ENCODE measurements at regions of chr7 and their contacts with region 1.

Region 1: GRCh38 chr7:94657771-94658693 is 2.1 kb upstream of the SGCE start:
- DNase-seq: peak; percentile 82
- CTCF ChIP-seq: no peak

Region 2: DNA sequence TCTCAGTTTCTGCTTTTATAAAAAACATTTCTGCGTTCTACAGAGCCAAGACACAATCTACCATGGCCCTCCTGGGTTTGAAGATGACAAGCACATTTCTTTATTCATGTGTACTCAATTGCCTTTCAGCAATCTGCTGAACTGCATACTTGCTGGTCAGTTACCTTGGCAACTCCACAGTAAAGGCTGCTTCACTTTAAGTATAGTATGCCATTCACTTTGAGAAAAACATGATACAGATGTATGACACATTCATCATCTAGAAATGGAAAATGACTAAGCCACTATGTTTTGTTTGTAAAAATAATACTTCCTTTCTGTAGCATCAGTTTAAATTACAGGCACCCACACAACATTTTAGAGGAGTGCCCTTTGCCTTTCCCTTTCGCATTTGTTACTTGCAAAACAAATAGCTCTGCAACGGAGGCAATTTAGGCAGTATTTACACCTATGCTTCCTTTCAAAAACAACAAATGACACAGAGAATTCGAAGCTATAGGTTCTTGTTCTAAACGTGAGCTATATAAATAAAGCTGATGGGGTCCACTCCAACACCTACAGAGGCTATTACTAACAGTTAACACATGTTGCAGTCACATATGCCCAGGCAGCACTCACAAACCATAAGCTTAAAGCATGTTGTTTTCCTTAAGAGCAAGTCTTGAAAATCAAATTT is 25.6 kb before region 1 on chr7:
- CTCF ChIA-PET with region 1: interaction called, 14 read pairs
- POLR2A ChIA-PET with region 1: no interaction called
- DNase-seq: no peak
- CTCF ChIP-seq: no peak

Region 3: GRCh38 chr7:94643771-94644540 is 14.1 kb before region 1 on chr7:
- CTCF ChIA-PET with region 1: interaction called, 14 read pairs
- POLR2A ChIA-PET with region 1: no interaction called
- DNase-seq: no peak
- CTCF ChIP-seq: no peak

Region 4: DNA sequence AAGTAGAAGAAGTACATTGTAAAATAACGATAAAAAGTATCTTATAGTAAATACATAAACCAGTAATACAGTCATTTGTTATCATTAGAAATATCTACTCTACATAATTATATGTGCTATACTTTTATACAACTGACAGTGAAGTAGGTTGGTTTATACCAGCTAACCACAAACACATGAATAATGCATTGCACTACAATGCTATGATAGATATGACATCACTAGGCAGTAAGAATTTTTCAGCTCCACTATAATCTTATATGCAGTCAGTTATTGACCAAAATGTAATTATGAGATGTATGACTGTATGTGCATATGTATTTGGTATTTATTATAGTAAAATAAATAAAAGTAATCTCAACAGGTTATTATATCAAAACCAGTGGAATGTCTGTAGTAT is 21.3 kb after region 1 on chr7:
- CTCF ChIA-PET with region 1: no interaction called
- POLR2A ChIA-PET with region 1: no interaction called
- DNase-seq: no peak
- CTCF ChIP-seq: no peak

Measured in GM10248 (cell line).